ENCODE measurements at regions of chr19 and their contacts with region 1.

Region 1: GRCh38 chr19:40139533-40140287 is 49.0 kb upstream of the ZNF780A start:
- DNase-seq: peak; percentile 74
- H3K4me3 Mint-ChIP-seq: no peak overlapping the region
- H3K27ac Mint-ChIP-seq: no peak overlapping the region
- H3K4me1 Mint-ChIP-seq: peaks cover 11% of the 10 kb centered on the region
- H3K27me3 Mint-ChIP-seq: peaks cover 19% of the 10 kb centered on the region

Region 2: GRCh38 chr19:40035996-40036395 is 103.7 kb before region 1 on chr19:
- intact Hi-C with region 1: no loop called
- DNase-seq: no peak
- H3K4me3 Mint-ChIP-seq: no peak overlapping the region
- H3K27ac Mint-ChIP-seq: no peak overlapping the region
- H3K4me1 Mint-ChIP-seq: no peaks in the 10 kb centered on the region
- H3K27me3 Mint-ChIP-seq: no peaks in the 10 kb centered on the region

Region 3: DNA sequence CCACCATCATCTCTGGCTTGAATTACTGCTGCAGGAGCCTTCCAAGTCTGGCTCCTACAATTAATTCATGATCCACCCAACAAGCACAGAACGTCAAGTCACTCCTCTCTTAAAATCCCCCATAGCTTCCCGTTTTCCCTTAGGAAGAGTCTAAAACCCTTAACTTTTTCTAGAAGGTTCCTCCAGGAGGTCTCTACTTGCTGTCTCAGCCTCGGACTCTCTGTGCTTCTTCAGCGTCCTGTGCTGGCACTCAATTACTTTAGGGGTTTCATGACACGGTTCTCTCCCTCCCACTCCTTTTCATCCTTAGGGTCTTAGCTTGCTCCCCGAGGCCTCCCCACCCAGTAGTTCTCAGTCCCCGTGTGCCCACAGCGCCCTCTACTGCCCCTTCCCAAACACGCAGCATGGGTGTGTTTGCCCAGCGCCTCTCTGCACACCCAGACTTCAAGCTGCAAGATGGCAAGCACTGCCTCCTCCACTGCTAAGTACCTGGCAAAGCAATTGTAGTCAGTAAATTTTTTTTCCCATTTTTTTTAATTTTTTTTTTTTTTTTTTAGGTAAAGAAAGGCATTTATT is 25.7 kb after region 1 on chr19:
- intact Hi-C with region 1: loop called (anchors 1 kb)
- DNase-seq: peak; percentile 88
- H3K4me3 Mint-ChIP-seq: no peak overlapping the region
- H3K27ac Mint-ChIP-seq: peak overlapping the region; percentile 4
- H3K4me1 Mint-ChIP-seq: peaks cover 9% of the 10 kb centered on the region
- H3K27me3 Mint-ChIP-seq: no peaks in the 10 kb centered on the region

Region 4: DNA sequence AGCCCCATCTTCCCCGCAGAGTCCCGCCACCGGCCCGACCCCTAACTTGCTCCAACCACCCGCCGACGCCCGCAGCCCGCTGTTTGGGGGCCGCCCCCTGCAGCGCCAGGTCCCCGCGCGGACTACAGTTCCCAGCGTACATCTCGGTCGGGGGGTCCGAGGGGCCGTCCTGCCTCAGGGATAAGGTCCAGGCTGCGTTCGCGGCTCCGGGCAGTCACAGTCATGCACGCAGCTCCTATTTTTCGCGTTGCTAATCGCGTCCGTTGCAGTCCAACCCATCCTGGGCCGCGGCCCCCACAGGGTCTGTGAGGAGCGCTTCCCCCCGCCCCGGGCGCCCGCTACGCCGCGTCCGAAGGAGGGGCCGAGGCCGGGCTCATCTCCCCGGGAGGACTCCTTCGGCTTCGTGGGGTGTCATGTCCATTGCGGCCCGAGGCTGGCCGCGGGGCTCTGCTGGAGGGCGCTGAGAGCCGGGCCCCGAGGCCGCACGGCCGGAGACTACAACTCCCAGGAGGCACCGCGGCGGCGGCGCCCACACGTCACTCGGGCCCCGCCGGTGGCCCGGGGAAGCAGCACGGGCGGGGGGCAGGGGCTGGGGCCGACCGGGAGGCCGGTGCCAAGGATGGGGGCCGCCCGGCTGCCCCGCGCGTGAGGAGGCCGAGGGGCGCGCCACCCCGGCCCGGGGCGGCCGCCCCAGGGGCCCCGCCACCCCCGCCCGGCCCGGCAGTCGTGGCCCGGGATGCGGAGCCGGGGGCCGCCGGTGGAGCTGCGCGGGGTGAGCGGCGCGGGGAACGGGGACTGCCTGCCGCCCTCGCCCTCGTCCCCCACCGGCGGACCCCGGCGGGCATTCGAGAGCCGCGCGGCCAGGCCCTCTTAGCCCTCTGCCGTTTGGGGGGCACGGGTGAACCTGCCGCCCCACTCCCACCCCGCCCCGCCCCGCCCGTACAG is 51.5 kb after region 1 on chr19 and contains the start of gene MAP3K10:
- intact Hi-C with region 1: loop called (anchors 2 kb)
- DNase-seq: peak; percentile 94
- H3K4me3 Mint-ChIP-seq: peak within 1 kb of the TSS; percentile 90
- H3K27ac Mint-ChIP-seq: peak within 1 kb of the TSS; percentile 96
- H3K4me1 Mint-ChIP-seq: peaks cover 26% of the 10 kb centered on the region
- H3K27me3 Mint-ChIP-seq: no peaks in the 10 kb centered on the region
- total RNA-seq, gene MAP3K10: 16.6 and 17.6 TPM in 2 replicates

Region 5: GRCh38 chr19:40221858-40222837 is 82.4 kb after region 1 on chr19:
- intact Hi-C with region 1: loop called (anchors 1 kb)
- DNase-seq: peak; percentile 93
- H3K4me3 Mint-ChIP-seq: peak overlapping the region; percentile 1
- H3K27ac Mint-ChIP-seq: peak overlapping the region; percentile 14
- H3K4me1 Mint-ChIP-seq: peaks cover 13% of the 10 kb centered on the region
- H3K27me3 Mint-ChIP-seq: peaks cover 55% of the 10 kb centered on the region

Measured in activated CD4-positive, alpha-beta T cell treated with anti-CD3 and anti-CD28 coated beads, Interleukin-2, amount 10 ng/mL, durations not matched to agents 24 days and 14 days (primary cell).